CD8-positive, alpha-beta T cell (primary cell): ENCODE measurements at regions of chr1 and their contacts with region 1.

Region 1: DNA sequence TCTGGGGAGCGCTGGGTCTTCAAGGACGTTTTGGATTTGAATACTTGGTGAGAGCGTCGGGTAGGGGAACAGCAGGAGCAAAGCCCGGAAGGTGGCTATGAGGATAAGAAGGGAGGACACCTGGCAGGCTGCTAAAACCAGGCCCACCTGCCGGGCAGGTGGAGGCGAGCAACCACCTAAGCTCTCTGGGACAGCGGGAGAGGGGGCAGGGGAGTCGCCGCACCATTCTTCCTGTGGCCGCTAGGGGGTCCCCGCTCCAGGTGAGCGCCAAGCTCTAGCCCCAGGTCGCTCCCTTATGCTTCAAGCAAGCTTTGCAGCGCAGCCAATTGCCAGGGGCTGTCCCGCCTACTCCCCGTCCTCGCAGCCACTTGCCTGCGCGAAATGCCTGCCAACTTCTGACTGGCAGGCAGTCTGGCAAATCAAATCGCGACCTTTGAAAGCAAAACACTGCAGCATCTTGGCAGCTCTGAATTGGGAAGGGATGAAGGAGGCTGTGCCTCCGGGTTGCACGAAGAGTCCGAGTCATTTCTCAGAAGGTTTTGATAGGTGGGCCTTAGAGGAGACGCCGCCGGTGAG is at the start of gene NIPAL3:
- DNase-seq: peak; percentile 94 to 99 (median 97)
- ATAC-seq: peak; percentile 94
- H3K4me3 ChIP-seq: peak within 1 kb of the TSS; percentile 78 to 98
- H3K4me3 Mint-ChIP-seq: peak within 1 kb of the TSS; percentile 97
- H3K27ac ChIP-seq: peak within 1 kb of the TSS; percentile 57 to 64
- H3K27ac Mint-ChIP-seq: peak within 1 kb of the TSS; percentile 93
- H3K4me1 ChIP-seq: peaks cover 43% of the 10 kb centered on the region
- H3K4me1 Mint-ChIP-seq: peaks cover 79% of the 10 kb centered on the region
- H3K27me3 ChIP-seq: no peaks in the 10 kb centered on the region
- H3K27me3 Mint-ChIP-seq: no peaks in the 10 kb centered on the region
- CTCF ChIP-seq: peak; percentile 74
- total RNA-seq, gene NIPAL3: 22.3 to 22.7 TPM

Region 2: GRCh38 chr1:24201941-24202440 is 213.4 kb before region 1 on chr1:
- CTCF ChIA-PET with region 1: interaction called, 14 read pairs
- POLR2A ChIA-PET with region 1: interaction called, 4 read pairs
- intact Hi-C with region 1: no loop called
- DNase-seq: peak; percentile 26 to 72 (median 59)
- ATAC-seq: no peak
- H3K4me3 ChIP-seq: no peak overlapping the region
- H3K4me3 Mint-ChIP-seq: no peak overlapping the region
- H3K27ac ChIP-seq: no peak overlapping the region
- H3K27ac Mint-ChIP-seq: no peak overlapping the region
- H3K4me1 ChIP-seq: peaks cover 4% of the 10 kb centered on the region
- H3K4me1 Mint-ChIP-seq: peaks cover 8% of the 10 kb centered on the region
- H3K27me3 ChIP-seq: no peaks in the 10 kb centered on the region
- H3K27me3 Mint-ChIP-seq: peaks cover 2% of the 10 kb centered on the region
- CTCF ChIP-seq: peak; percentile 80

Region 3: GRCh38 chr1:24374891-24375786 is 40.3 kb before region 1 on chr1:
- CTCF ChIA-PET with region 1: no interaction called
- POLR2A ChIA-PET with region 1: no interaction called
- intact Hi-C with region 1: no loop called
- DNase-seq: no peak
- ATAC-seq: no peak
- H3K4me3 ChIP-seq: no peak overlapping the region
- H3K4me3 Mint-ChIP-seq: no peak overlapping the region
- H3K27ac ChIP-seq: no peak overlapping the region
- H3K27ac Mint-ChIP-seq: no peak overlapping the region
- H3K4me1 ChIP-seq: no peaks in the 10 kb centered on the region
- H3K4me1 Mint-ChIP-seq: no peaks in the 10 kb centered on the region
- H3K27me3 ChIP-seq: no peaks in the 10 kb centered on the region
- H3K27me3 Mint-ChIP-seq: no peaks in the 10 kb centered on the region
- CTCF ChIP-seq: no peak

Region 4: GRCh38 chr1:24426744-24427544 is 11.5 kb after region 1 on chr1:
- CTCF ChIA-PET with region 1: interaction called, 31 read pairs
- POLR2A ChIA-PET with region 1: interaction called, 5 read pairs
- intact Hi-C with region 1: no loop called
- DNase-seq: no peak
- ATAC-seq: no peak
- H3K4me3 ChIP-seq: no peak overlapping the region
- H3K4me3 Mint-ChIP-seq: no peak overlapping the region
- H3K27ac ChIP-seq: no peak overlapping the region
- H3K27ac Mint-ChIP-seq: peak overlapping the region; percentile 13
- H3K4me1 ChIP-seq: peaks cover 11% of the 10 kb centered on the region
- H3K4me1 Mint-ChIP-seq: peaks cover 66% of the 10 kb centered on the region
- H3K27me3 ChIP-seq: no peaks in the 10 kb centered on the region
- H3K27me3 Mint-ChIP-seq: no peaks in the 10 kb centered on the region
- CTCF ChIP-seq: no peak

Region 5: GRCh38 chr1:24502709-24503058 is 87.3 kb after region 1 on chr1 and contains the start of gene RCAN3:
- CTCF ChIA-PET with region 1: interaction called, 72 read pairs
- POLR2A ChIA-PET with region 1: interaction called, 19 read pairs
- intact Hi-C with region 1: loop called (anchors 1 kb)
- DNase-seq: peak; percentile 78 to 95 (median 88)
- ATAC-seq: peak; percentile 63
- H3K4me3 ChIP-seq: peak within 1 kb of the TSS; percentile 73 to 76
- H3K4me3 Mint-ChIP-seq: peak within 1 kb of the TSS; percentile 99
- H3K27ac ChIP-seq: peak within 1 kb of the TSS; percentile 82 to 95
- H3K27ac Mint-ChIP-seq: peak within 1 kb of the TSS; percentile 99
- H3K4me1 ChIP-seq: peaks cover 47% of the 10 kb centered on the region
- H3K4me1 Mint-ChIP-seq: peaks cover 70% of the 10 kb centered on the region
- H3K27me3 ChIP-seq: no peaks in the 10 kb centered on the region
- H3K27me3 Mint-ChIP-seq: no peaks in the 10 kb centered on the region
- CTCF ChIP-seq: no peak
- total RNA-seq, gene RCAN3: 129 to 130 TPM

Region 6: DNA sequence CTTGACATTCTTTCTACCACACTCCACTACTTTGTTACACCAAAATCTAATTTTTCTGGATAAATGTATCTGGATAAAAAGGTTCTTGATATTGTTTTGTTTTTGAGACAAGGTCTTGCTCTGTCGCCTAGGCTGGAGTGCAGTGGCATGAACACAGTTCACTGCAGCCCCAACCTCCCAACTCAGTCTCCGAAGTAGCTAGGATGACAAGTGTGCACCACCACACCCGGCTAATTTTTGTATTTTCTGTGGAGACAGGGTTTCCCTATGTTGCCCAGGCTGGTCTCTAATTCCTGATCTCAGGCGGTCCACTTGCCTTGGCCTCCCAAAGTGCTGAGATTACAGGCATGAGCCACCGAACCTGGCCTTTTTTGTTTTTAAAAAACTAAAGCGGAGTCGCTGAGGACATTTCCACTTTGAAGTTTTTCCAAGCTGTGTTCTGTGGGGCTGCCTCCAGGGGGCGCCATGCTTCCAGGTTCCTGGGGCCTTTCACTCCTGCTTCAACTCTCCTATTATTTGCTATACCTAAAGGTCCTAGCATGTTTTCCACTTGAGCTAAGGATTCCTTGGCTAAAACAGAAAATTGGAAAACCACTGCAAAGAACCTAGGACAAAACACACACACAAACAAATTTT is 126.4 kb after region 1 on chr1:
- CTCF ChIA-PET with region 1: interaction called, 21 read pairs
- POLR2A ChIA-PET with region 1: interaction called, 3 read pairs
- intact Hi-C with region 1: no loop called
- DNase-seq: peak in 3 of 9 experiments; percentile 33 to 49 (median 38)
- ATAC-seq: no peak
- H3K4me3 ChIP-seq: no peak overlapping the region
- H3K4me3 Mint-ChIP-seq: no peak overlapping the region
- H3K27ac ChIP-seq: no peak overlapping the region
- H3K27ac Mint-ChIP-seq: peak overlapping the region; percentile 79
- H3K4me1 ChIP-seq: peaks cover 52% of the 10 kb centered on the region
- H3K4me1 Mint-ChIP-seq: peaks cover 62% of the 10 kb centered on the region
- H3K27me3 ChIP-seq: no peaks in the 10 kb centered on the region
- H3K27me3 Mint-ChIP-seq: no peaks in the 10 kb centered on the region
- CTCF ChIP-seq: peak; percentile 48

Region 7: DNA sequence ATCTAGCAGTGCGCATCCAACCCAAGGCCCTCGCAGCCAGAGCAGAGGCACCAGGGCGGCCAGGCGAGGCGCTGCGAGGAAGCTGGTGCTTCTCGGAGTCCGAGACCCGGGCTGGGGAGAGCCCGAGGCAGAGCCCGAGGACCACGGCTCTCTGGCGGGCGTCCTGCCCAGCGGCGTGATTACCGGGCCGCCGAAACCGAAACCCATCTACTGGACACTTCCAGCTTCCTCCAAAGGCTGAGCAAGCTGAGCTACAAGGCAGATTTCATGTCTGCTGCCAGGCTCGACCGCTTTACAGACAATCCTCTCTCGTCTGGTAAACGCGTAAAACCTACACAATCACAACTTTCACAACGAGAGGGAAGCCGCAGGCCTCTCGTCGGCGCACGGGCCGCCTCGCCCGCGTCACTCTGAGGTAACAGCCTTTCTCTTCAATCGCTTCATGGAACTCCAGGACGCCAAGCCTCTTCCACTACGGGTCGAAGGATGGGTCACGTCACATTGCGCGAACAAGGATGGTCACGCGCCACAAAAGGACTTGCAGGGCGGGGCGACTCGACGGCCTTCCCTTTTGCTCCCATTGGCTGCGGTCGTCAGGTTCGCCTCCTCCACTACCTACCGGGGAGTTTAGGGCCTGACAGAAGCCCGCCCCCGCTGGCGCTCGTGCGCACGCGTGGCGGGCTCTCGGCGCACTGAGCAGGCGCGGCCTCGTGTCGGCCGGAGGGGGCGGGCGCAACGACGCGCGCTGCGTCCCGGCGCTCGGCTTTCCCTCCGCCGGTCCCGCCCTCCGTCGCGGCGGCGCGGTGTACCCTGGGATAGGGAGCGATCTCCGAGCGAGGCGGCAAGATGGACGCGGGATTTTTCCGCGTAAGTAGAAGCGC is 227.3 kb after region 1 on chr1 and contains the start of gene SRRM1:
- CTCF ChIA-PET with region 1: interaction called, 3 read pairs
- POLR2A ChIA-PET with region 1: no interaction called
- intact Hi-C with region 1: loop called (anchors 1 kb)
- DNase-seq: peak; percentile 96 to 100 (median 98)
- ATAC-seq: peak; percentile 86
- H3K4me3 ChIP-seq: peak within 1 kb of the TSS; percentile 89 to 98
- H3K4me3 Mint-ChIP-seq: peak within 1 kb of the TSS; percentile 88
- H3K27ac ChIP-seq: peak within 1 kb of the TSS; percentile 98 to 100
- H3K27ac Mint-ChIP-seq: peak within 1 kb of the TSS; percentile 99
- H3K4me1 ChIP-seq: peaks cover 32% of the 10 kb centered on the region
- H3K4me1 Mint-ChIP-seq: peaks cover 41% of the 10 kb centered on the region
- H3K27me3 ChIP-seq: no peaks in the 10 kb centered on the region
- H3K27me3 Mint-ChIP-seq: no peaks in the 10 kb centered on the region
- CTCF ChIP-seq: no peak
- total RNA-seq, gene SRRM1: 460 to 474 TPM